ENCODE measurements at regions of chr12 and their contacts with region 1.

Region 1: DNA sequence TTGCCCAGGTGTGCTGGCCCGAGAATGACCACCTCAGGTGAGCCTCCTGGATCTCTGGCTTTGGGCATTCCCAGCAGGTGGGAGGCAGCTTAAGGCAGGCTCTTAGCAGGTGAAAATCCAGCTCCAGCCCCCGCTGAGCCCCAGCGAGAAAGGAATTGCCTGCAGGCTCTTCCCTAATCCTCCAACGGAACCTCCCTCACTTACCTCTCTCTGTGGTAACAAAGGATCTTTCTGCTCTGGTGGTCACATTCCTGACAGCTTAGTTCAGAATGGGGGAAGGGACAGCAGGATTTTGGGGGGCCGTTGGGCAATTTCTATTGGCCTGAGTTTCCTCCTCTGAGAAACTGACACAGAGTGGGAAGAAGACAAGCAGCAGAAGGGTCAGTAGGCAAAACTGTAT is 116.0 kb upstream of the LHX5 start:
- DNase-seq: no peak
- ATAC-seq: no peak
- H3K4me3 ChIP-seq: no peak overlapping the region
- H3K27ac ChIP-seq: no peak overlapping the region
- H3K4me1 ChIP-seq: no peaks in the 10 kb centered on the region
- H3K27me3 ChIP-seq: peaks cover 6 to 33% (median 6%) of the 10 kb centered on the region in 3 donors
- CTCF ChIP-seq: no peak

Region 2: DNA sequence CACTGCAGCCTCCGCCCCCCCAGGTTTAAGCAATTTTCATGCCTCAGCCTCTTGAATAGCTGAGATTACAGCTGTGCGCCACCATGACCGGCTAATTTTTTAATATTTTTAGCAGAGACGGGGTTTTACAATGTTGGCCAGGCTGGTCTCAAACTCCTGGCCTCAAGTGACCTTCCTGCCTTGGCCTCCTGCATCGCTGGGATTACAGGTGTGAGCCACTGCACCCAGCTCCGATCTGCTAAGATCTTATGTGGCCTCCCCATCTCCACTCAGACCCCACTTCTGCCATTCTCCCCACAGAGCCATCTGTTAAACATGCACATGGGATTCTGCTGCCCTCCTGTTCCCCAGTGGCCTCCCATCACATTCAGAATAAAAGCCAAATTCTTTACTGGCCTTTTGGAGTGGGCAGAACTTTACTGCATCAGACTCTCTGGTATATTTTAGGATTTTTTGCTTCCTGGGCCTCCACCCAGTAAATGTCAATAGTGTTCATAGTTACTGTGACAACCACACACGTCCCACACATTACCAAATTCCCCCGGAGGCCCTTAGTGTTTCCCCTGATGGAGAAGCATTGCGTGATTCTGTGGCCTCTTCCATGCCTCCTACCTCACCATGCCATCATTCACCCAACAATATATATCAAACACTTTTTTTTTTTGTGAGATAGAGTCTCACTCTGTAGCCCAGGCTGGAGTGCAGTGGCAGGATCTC is 1072.6 kb before region 1 on chr12:
- intact Hi-C with region 1: loop called in 1 of 2 experiments (anchors 5 kb)
- DNase-seq: no peak
- ATAC-seq: no peak
- H3K4me3 ChIP-seq: no peak overlapping the region
- H3K27ac ChIP-seq: no peak overlapping the region
- H3K4me1 ChIP-seq: no peaks in the 10 kb centered on the region
- H3K27me3 ChIP-seq: no peaks in the 10 kb centered on the region
- CTCF ChIP-seq: no peak

Region 3: DNA sequence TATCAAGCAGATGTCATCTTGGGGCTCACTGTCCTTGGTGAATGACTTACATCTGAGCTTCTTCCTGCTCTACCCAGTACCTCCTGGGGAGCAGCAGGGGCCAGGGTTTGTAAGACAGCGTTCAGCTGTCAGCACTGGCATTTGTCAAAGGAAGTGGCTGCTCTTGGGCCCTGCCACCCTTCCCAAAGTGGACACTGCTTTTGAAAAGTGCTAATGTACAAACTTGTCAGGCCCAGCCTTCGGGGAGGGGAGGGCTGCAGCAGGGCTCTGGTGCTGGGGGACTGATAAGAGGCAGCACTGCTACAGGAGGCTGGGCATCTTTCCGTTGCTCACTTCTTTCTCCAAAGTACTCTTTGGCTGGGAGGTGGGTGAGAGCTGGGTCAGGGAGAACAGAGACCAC is 438.2 kb after region 1 on chr12:
- intact Hi-C with region 1: no loop called
- DNase-seq: no peak
- ATAC-seq: no peak
- H3K4me3 ChIP-seq: no peak overlapping the region
- H3K27ac ChIP-seq: no peak overlapping the region
- H3K4me1 ChIP-seq: no peaks in the 10 kb centered on the region
- H3K27me3 ChIP-seq: peaks cover 0 to 6% (median 4%) of the 10 kb centered on the region in 3 donors
- CTCF ChIP-seq: no peak